Activated CD4-positive, alpha-beta memory T cell treated with anti-CD3 and anti-CD28 coated beads for 36 hours (primary cell): ENCODE measurements at regions of chr1 and their contacts with region 1.

Region 1: DNA sequence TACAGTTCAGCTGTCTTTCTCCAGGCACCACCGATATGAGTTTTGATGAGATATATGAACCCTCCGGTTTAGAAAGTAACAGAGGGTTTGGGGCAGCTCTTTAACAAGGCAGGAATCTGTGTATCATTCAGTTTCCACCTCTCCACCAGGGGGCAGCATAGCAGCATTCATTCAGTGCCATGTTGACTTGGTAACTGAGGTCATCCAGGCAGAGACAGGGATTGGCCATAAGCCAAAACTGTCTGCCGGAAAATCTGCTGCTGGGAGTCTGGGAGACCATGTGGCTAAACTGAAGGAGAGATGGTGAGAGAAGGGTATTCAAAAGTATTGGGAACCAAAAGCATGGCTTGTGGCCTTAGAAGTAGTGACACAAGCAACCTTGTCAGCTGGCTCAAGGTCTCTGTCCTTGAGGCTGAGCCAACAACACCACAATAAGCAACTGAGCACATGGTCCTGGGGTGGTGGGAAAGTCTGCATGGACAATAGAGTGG is 98.5 kb downstream of the LMX1A start:
- DNase-seq: peak; percentile 53
- H3K4me3 Mint-ChIP-seq: no peak overlapping the region
- H3K27ac Mint-ChIP-seq: no peak overlapping the region
- H3K4me1 Mint-ChIP-seq: no peaks in the 10 kb centered on the region
- H3K27me3 Mint-ChIP-seq: peaks cover 5% of the 10 kb centered on the region

Region 2: GRCh38 chr1:164971921-164972415 is 286.0 kb before region 1 on chr1:
- CTCF ChIA-PET with region 1: no interaction called
- POLR2A ChIA-PET with region 1: no interaction called
- intact Hi-C with region 1: no loop called
- DNase-seq: no peak
- H3K4me3 Mint-ChIP-seq: no peak overlapping the region
- H3K27ac Mint-ChIP-seq: no peak overlapping the region
- H3K4me1 Mint-ChIP-seq: no peaks in the 10 kb centered on the region
- H3K27me3 Mint-ChIP-seq: no peaks in the 10 kb centered on the region

Region 3: GRCh38 chr1:165224504-165224903 is 33.5 kb before region 1 on chr1:
- CTCF ChIA-PET with region 1: no interaction called
- POLR2A ChIA-PET with region 1: no interaction called
- intact Hi-C with region 1: no loop called
- DNase-seq: no peak
- H3K4me3 Mint-ChIP-seq: no peak overlapping the region
- H3K27ac Mint-ChIP-seq: no peak overlapping the region
- H3K4me1 Mint-ChIP-seq: no peaks in the 10 kb centered on the region
- H3K27me3 Mint-ChIP-seq: peaks cover 4% of the 10 kb centered on the region

Region 4: GRCh38 chr1:165352442-165353293 is 94.7 kb after region 1 on chr1:
- CTCF ChIA-PET with region 1: no interaction called
- POLR2A ChIA-PET with region 1: no interaction called
- intact Hi-C with region 1: no loop called
- DNase-seq: no peak
- H3K4me3 Mint-ChIP-seq: no peak overlapping the region
- H3K27ac Mint-ChIP-seq: no peak overlapping the region
- H3K4me1 Mint-ChIP-seq: peaks cover 10% of the 10 kb centered on the region
- H3K27me3 Mint-ChIP-seq: peaks cover 69% of the 10 kb centered on the region

Region 5: DNA sequence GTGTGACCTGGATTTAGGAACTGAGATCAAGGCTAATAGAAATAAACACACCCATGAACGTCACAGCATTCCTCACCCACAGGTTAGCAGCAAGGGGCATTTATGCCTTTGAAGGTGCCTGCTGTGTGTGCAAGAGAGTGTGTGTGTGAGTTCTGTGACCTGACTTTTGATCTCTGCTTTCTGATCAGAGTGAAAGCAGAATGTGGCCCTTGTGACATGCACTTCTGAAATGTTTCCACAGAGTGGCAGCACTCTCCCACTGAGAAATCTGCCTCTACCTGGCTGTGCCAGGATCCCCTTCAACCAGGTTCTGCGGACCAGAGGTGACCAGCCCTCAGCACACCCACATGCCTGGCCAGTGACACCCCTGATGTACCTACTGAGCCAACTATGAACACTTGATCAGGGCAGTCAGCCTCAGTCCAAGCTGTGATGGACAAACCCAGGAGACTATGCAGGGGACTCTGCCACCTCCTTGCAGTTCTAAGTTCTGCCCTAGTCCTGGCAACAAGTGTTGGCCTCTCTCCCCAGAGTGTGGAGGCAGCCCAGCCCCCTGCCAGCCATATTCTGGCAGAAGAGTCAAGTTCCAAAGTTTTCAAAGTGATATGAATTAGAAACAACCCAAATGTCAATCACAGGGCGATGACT is 145.9 kb after region 1 on chr1:
- CTCF ChIA-PET with region 1: interaction called, 4 read pairs
- POLR2A ChIA-PET with region 1: no interaction called
- intact Hi-C with region 1: loop called (anchors 5 kb)
- DNase-seq: peak; percentile 49
- H3K4me3 Mint-ChIP-seq: no peak overlapping the region
- H3K27ac Mint-ChIP-seq: no peak overlapping the region
- H3K4me1 Mint-ChIP-seq: no peaks in the 10 kb centered on the region
- H3K27me3 Mint-ChIP-seq: peaks cover 18% of the 10 kb centered on the region